Uterus (tissue), 4 donors: ENCODE measurements at regions of chr5 and their contacts with region 1.

Region 1: DNA sequence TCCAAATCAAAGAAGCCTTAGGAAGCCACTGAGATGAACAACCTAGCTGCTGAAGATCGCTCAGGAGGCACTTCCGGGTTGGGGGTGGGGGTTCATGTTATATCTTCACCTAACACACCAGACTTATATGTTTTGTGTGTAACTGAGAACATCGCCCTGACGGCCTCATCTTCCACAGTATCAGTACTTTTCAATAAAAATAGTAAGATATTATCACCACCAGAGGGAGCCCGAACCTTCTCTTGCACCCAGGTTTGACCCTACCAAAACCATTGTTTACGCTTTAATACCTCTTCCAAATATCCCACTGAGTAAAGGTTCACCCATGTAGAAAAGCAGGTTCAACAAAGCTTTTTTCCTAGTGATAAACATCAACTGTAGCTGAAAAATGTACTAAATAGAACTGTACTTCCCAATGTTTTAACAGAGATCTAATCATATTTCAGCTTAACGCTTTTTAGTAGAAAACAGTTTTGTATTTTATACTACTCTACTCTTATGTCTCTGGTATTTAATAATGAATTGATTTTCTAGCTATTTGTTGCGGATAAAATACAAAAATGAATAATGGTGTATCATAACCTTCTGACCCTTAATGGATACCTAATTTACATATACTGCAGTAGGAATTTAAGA is 244.0 kb downstream of the EPB41L4A start:
- DNase-seq: peak; percentile 15 to 20
- H3K4me3 ChIP-seq: no peak overlapping the region
- H3K27ac ChIP-seq: no peak overlapping the region
- H3K4me1 ChIP-seq: no peaks in the 10 kb centered on the region
- H3K27me3 ChIP-seq: no peaks in the 10 kb centered on the region
- CTCF ChIP-seq: peak; percentile 42 to 67 (median 59)
- POLR2A ChIP-seq: no peak

Region 2: DNA sequence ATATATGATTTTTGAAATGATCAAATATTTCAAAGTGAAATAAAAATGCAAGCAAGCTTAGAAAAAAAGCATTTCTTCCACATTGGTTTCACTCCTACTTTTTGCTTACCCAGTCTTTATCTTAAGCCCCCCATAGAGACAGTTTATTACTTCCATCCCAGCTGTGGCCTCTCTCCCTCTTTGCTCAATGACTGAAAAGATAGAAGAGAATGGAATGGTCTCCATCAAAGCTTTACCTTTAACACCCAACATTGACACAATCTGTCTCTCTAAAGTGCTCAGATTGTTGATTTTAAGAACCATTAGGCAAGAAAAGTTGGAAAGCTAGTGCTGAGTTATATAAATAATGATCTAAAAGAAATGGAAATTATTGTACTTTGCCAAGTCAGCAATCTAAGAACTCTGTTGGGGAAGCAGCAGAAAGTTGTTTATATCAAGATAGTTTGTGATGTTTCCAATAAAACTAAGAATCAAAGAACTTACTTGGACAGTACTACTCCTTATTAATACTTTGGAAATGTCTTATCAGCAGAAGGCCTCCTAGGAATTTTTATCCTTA is 140.6 kb before region 1 on chr5:
- intact Hi-C with region 1: no loop called
- DNase-seq: no peak
- H3K4me3 ChIP-seq: no peak overlapping the region
- H3K27ac ChIP-seq: no peak overlapping the region
- H3K4me1 ChIP-seq: no peaks in the 10 kb centered on the region
- H3K27me3 ChIP-seq: no peaks in the 10 kb centered on the region
- CTCF ChIP-seq: no peak
- POLR2A ChIP-seq: no peak

Region 3: DNA sequence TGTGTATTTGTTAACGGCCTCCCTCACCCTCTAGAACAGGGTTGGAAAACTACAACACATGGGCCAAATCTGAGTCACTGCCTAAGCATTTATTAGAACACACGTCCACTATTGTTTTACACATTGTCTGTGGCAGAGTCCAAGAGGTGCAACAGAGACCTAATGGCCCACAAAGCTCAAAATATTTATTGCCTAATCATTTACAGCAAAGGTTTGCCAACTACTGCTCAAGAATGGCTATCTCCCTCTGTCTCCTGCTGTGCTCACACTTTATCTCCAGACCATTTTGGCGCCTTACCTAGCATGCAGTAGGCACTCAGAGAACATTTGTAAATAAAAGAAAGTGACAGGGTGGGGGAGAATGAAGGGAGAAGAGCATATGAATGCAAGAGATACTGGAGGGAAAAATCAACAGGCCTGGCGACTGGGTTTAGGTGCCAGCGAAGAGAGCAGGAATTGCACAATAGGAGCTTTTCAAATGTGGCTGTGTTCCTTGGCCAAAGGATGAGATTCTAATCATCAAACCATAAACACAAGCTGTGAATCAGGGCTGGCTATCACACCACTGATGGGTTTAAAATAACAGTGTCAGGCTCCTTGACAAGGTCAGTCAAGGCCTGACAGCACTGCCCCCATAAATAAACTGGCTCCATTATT is 163.7 kb after region 1 on chr5:
- intact Hi-C with region 1: no loop called
- DNase-seq: no peak
- H3K4me3 ChIP-seq: no peak overlapping the region
- H3K27ac ChIP-seq: no peak overlapping the region
- H3K4me1 ChIP-seq: no peaks in the 10 kb centered on the region
- H3K27me3 ChIP-seq: no peaks in the 10 kb centered on the region
- CTCF ChIP-seq: no peak
- POLR2A ChIP-seq: no peak

Region 4: GRCh38 chr5:112355058-112355685 is 180.1 kb after region 1 on chr5:
- intact Hi-C with region 1: no loop called
- DNase-seq: no peak
- H3K4me3 ChIP-seq: no peak overlapping the region
- H3K27ac ChIP-seq: no peak overlapping the region
- H3K4me1 ChIP-seq: no peaks in the 10 kb centered on the region
- H3K27me3 ChIP-seq: no peaks in the 10 kb centered on the region
- CTCF ChIP-seq: no peak
- POLR2A ChIP-seq: no peak

Region 5: DNA sequence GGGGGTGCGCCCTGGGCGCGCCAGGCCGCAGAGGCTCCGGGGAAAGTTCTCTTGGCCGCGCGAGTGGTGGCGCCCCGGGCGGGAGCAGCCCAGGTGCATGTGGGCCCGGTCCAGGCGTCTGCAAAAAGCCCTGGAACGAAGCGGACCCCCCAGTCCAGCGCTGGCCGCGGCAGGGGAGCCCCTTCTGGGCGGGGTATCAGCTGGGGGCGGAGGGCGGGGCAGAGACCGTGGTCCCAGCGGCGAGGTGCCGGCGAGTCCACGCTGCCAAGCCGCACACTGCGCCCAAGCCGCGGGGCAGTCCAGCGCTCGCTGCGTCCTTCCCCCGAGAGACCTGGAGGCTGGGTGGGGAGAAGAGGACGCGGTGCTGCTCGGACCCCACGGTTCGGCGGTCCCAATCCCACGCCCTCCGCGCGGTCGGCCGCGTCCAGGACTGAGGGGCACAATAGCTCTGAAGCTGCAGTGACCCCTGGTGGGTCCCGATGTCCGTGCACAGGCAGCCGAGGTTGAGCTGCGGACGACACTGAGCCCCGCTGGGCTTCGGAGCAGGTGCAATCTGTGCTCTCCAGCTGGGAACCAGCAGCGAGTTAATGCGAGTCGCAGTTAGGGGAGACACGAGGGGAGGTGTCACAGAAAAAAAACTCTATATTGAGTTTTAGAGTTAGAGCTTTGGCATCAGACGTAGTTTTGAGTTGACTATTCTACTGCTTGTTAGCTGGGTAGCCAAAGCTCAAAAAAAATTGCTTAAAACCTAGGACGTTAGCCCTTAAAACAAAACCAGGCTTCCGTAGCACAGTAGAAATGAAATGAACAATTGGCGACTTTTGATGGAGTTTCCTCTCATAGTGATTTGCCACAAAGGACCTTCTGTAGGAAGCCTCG is 245.1 kb after region 1 on chr5:
- intact Hi-C with region 1: loop called (anchors 10 kb)
- DNase-seq: peak; percentile 68 to 76
- H3K4me3 ChIP-seq: peak overlapping the region; percentile 57 to 75
- H3K27ac ChIP-seq: peak overlapping the region; percentile 58 to 72
- H3K4me1 ChIP-seq: no peaks in the 10 kb centered on the region
- H3K27me3 ChIP-seq: no peaks in the 10 kb centered on the region
- CTCF ChIP-seq: peak; percentile 68 to 93 (median 86)
- POLR2A ChIP-seq: peak in 1 of 2 donors; percentile 20